Dorsolateral prefrontal cortex (tissue), 120 donors: ENCODE measurements at regions of chr3 and their contacts with region 1.

Region 1: GRCh38 chr3:182508916-182509711 is 284.2 kb upstream of the ATP11B start:
- DNase-seq: peak in 1 of 10 donors; percentile 34
- H3K4me3 ChIP-seq: peak overlapping the region in 46 of 59 donors; percentile 1 to 58 (median 34)
- H3K27ac ChIP-seq: peak overlapping the region in 51 of 59 donors; percentile 3 to 85 (median 69)
- H3K27me3 ChIP-seq: no peaks in the 10 kb centered on the region
- CTCF ChIP-seq: no peak

Region 2: GRCh38 chr3:181726351-181727330 is 782.5 kb before region 1 on chr3:
- intact Hi-C with region 1: loop called in 1 of 2 experiments (anchors 10 kb)
- DNase-seq: peak in 2 of 10 donors; percentile 34 to 49
- H3K4me3 ChIP-seq: peak overlapping the region; percentile 21 to 86 (median 56)
- H3K27ac ChIP-seq: peak overlapping the region; percentile 66 to 100 (median 93)
- H3K27me3 ChIP-seq: peaks cover 0 to 93% (median 50%) of the 10 kb centered on the region in 45 donors
- CTCF ChIP-seq: peak in 45 of 56 donors; percentile 5 to 71 (median 30)

Region 3: GRCh38 chr3:182420731-182421130 is 88.4 kb before region 1 on chr3:
- intact Hi-C with region 1: no loop called
- DNase-seq: no peak
- H3K4me3 ChIP-seq: no peak overlapping the region
- H3K27ac ChIP-seq: no peak overlapping the region
- H3K27me3 ChIP-seq: no peaks in the 10 kb centered on the region
- CTCF ChIP-seq: no peak